Dorsolateral prefrontal cortex (tissue), 120 donors: ENCODE measurements at regions of chr19 and their contacts with region 1.

Region 1: DNA sequence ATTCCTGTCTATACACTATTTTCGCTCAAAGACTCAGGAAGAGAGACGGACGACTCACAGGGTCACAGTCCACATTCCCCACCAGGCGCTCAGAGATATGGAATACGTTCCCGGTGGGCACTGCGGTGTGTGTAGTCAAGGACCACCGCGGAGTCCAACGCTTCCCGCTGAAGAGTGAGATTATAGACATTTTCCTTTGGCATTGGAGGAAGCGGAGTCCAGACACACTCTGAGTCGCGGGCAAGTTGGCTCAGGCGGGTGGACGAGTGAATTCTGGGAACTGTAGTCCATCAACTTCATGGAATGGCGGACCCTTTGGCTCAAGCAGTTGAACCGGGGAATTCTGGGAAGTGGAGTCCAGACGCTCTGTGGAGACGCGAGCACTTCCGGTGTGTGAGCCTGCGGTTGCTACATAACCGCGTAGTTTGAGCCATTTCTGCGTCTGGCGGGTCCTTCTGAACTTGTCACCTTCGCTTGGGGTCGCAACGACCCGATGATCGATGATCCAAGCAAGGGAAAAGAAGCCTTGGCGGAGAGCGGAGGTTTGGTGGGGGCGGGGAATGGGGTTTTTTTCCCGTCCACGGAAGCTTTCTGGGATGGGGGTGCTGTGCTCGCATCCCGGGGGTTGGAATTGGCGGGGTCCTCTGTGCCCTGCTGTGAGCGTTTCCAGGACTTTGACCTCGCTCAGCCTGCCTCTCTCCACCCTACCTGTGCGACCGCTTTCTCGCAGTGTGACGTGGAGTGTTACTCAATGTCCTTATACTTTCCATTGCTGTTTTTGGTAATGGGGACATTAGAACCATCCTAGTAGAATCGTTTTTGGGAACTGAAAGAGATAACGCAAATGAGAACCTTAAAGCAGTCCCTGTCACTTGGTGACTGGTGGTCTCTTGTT is at the start of gene ZNF230:
- DNase-seq: peak; percentile 85 to 97 (median 94)
- H3K4me3 ChIP-seq: peak within 1 kb of the TSS; percentile 59 to 98 (median 88)
- H3K27ac ChIP-seq: peak within 1 kb of the TSS in 48 of 59 donors; percentile 10 to 90 (median 67)
- H3K27me3 ChIP-seq: no peaks in the 10 kb centered on the region
- CTCF ChIP-seq: peak in 16 of 56 donors; percentile 11 to 43 (median 30)
- total RNA-seq, gene ZNF230: 2.7 to 11.5 (median 6.4) TPM

Region 2: DNA sequence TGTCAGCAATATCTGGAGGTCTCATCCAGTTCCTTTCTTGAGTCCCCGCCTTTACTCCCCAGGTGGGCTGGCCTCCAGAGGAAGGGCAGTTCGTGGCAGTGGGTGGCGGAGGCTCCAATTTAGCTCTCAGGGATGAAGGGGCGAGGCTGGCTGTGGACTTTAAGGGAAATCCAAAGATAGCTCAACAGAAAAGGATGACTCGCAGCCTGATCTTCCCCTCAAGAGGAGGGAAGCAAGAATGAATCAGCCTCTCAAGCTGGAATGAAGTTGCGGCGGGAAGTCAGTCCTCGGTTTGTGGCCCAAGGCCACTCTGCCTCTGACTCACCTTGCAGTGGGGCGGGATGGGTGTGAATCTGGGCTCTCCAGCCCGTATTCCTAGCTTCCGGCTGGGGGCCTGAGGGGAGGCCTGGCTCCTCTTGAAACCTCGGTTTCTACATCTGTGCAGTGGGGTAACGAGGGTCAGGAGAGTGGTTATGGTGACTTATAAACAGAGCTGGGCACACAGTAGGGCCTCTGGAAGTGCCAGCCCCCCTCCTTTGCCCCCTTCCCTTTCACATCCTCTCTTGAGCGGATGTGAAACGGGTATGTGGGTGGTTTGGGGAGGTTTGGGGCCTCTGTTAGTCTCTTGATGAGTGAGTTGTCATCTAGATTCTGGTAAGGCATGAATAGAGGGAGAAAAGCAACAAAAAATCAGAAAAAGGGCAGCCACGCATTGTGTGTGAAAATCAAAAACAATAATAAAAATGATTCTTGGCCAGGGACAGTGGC is 237.5 kb before region 1 on chr19:
- intact Hi-C with region 1: no loop called
- DNase-seq: peak in 3 of 10 donors; percentile 27 to 75 (median 60)
- H3K4me3 ChIP-seq: no peak overlapping the region
- H3K27ac ChIP-seq: peak overlapping the region in 26 of 59 donors; percentile 1 to 53 (median 30)
- H3K27me3 ChIP-seq: no peaks in the 10 kb centered on the region
- CTCF ChIP-seq: no peak

Region 3: GRCh38 chr19:43950834-43951645 is 51.8 kb before region 1 on chr19 and contains the start of gene ZNF221:
- intact Hi-C with region 1: loop called in 1 of 2 experiments (anchors 5 kb)
- DNase-seq: peak; percentile 80 to 92 (median 88)
- H3K4me3 ChIP-seq: peak within 1 kb of the TSS; percentile 54 to 99 (median 85)
- H3K27ac ChIP-seq: peak within 1 kb of the TSS in 55 of 59 donors; percentile 2 to 86 (median 71)
- H3K27me3 ChIP-seq: no peaks in the 10 kb centered on the region
- CTCF ChIP-seq: peak in 53 of 56 donors; percentile 19 to 74 (median 59)
- total RNA-seq, gene ZNF221: 7.4 to 29.1 (median 15.2) TPM

Region 4: DNA sequence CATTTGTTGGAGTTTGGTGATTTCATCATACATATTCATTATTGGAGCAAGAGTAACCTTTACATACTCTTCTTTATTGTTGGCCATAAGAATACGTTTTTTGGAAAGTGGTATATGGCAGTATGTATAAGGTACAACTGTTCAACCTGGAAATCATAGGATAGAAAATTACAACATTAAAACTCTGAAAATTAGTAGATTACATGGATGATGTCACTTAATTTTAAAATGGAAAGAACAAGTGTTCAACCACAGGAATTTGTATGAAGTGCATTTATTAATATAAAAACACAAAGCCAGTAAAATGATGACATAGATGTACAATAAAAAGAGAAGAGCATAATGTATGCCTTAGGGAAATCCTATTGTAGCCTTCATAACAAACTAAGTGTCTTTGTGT is 26.1 kb before region 1 on chr19:
- intact Hi-C with region 1: no loop called
- DNase-seq: no peak
- H3K4me3 ChIP-seq: no peak overlapping the region
- H3K27ac ChIP-seq: no peak overlapping the region
- H3K27me3 ChIP-seq: no peaks in the 10 kb centered on the region
- CTCF ChIP-seq: no peak

Region 5: GRCh38 chr19:44025217-44025936 is 22.6 kb after region 1 on chr19 and contains the start of gene ZNF222:
- intact Hi-C with region 1: loop called in 1 of 2 experiments (anchors 2 kb)
- DNase-seq: peak; percentile 70 to 95 (median 88)
- H3K4me3 ChIP-seq: peak within 1 kb of the TSS; percentile 62 to 98 (median 87)
- H3K27ac ChIP-seq: peak within 1 kb of the TSS in 35 of 59 donors; percentile 6 to 84 (median 51)
- H3K27me3 ChIP-seq: peaks cover 0 to 6% (median 0%) of the 10 kb centered on the region in 45 donors
- CTCF ChIP-seq: peak in 8 of 56 donors; percentile 8 to 27 (median 16)
- total RNA-seq, gene ZNF222: 2.5 to 10.7 (median 7.0) TPM

Region 6: GRCh38 chr19:44071824-44072542 is 69.2 kb after region 1 on chr19 and contains the start of gene ZNF284:
- intact Hi-C with region 1: loop called in 1 of 2 experiments (anchors 5 kb)
- DNase-seq: peak; percentile 84 to 95 (median 92)
- H3K4me3 ChIP-seq: peak within 1 kb of the TSS; percentile 59 to 96 (median 79)
- H3K27ac ChIP-seq: peak within 1 kb of the TSS in 25 of 59 donors; percentile 3 to 73 (median 46)
- H3K27me3 ChIP-seq: no peaks in the 10 kb centered on the region
- CTCF ChIP-seq: peak in 22 of 56 donors; percentile 3 to 42 (median 21)
- total RNA-seq, gene ZNF284: 2.3 to 6.7 (median 4.1) TPM

Region 7: GRCh38 chr19:44113138-44113783 is 110.4 kb after region 1 on chr19 and contains the start of gene ZNF225:
- intact Hi-C with region 1: loop called (anchors 2 to 5 kb)
- DNase-seq: peak; percentile 96 to 99 (median 98)
- H3K4me3 ChIP-seq: peak within 1 kb of the TSS; percentile 59 to 98 (median 82)
- H3K27ac ChIP-seq: peak within 1 kb of the TSS in 50 of 59 donors; percentile 9 to 90 (median 70)
- H3K27me3 ChIP-seq: no peaks in the 10 kb centered on the region
- CTCF ChIP-seq: peak in 40 of 56 donors; percentile 3 to 56 (median 36)
- total RNA-seq, gene ZNF225: 4.5 to 14.2 (median 8.2) TPM